Mammary epithelial cell (primary cell): ENCODE measurements at regions of chr19 and their contacts with region 1.

Region 1: DNA sequence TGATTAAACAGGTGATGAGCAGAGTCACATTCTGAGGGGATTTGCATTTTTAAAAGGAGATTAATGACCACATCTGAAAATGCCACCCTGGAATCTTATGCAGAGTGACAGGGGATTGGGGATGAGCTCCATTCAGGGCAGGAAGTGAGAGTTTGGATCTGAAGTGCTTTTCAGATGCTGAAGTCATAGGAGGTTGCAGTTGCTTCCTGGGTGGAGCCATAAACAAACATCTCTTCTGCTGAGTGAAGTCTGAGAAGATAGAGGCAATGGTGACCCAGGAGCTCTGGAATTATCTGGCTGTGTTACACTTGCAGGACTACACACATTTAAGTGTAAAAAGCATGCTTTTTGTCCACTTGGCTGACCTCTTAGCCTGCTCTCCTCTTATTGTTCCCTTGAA is 51.4 kb upstream of the PSG8 start:
- DNase-seq: no peak
- H3K4me3 ChIP-seq: no peak overlapping the region
- H3K27ac ChIP-seq: no peak overlapping the region
- H3K4me1 ChIP-seq: peaks cover 23% of the 10 kb centered on the region
- H3K27me3 ChIP-seq: no peaks in the 10 kb centered on the region
- CTCF ChIP-seq: no peak

Region 2: GRCh38 chr19:42850981-42851717 is 34.3 kb after region 1 on chr19:
- CTCF ChIA-PET with region 1: no interaction called
- dilution Hi-C with region 1: no loop called
- in situ Hi-C with region 1: no loop called
- intact Hi-C with region 1: loop called (anchors 2 kb)
- DNase-seq: peak; percentile 90
- H3K4me3 ChIP-seq: no peak overlapping the region
- H3K27ac ChIP-seq: peak overlapping the region; percentile 95
- H3K4me1 ChIP-seq: peaks cover 37% of the 10 kb centered on the region
- H3K27me3 ChIP-seq: no peaks in the 10 kb centered on the region
- CTCF ChIP-seq: no peak

Region 3: GRCh38 chr19:42989851-42990250 is 173.0 kb after region 1 on chr19:
- CTCF ChIA-PET with region 1: no interaction called
- dilution Hi-C with region 1: no loop called
- in situ Hi-C with region 1: no loop called
- intact Hi-C with region 1: loop called (anchors 5 kb)
- DNase-seq: peak; percentile 26
- H3K4me3 ChIP-seq: no peak overlapping the region
- H3K27ac ChIP-seq: no peak overlapping the region
- H3K4me1 ChIP-seq: peaks cover 19% of the 10 kb centered on the region
- H3K27me3 ChIP-seq: no peaks in the 10 kb centered on the region
- CTCF ChIP-seq: no peak

Region 4: DNA sequence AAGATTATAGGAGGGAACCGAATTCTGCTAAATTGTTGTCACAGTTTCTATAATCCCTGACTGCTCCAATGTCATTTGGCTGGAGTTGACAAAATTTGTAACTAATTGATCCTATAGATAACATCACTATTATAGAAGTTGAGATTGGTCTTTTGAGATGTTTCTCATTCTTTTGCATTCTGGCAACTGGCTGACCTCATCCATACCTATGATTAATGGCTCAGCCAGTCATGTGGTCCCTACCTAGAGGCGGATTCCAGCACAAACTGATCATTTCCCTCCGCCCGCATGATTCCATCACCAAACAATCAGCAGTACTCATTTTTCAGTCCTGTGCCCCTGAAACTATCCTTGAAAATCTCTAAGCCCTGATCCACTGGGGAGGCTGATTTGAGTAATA is 261.4 kb after region 1 on chr19:
- CTCF ChIA-PET with region 1: no interaction called
- dilution Hi-C with region 1: no loop called
- in situ Hi-C with region 1: no loop called
- intact Hi-C with region 1: no loop called
- DNase-seq: peak; percentile 84
- H3K4me3 ChIP-seq: no peak overlapping the region
- H3K27ac ChIP-seq: peak overlapping the region; percentile 69
- H3K4me1 ChIP-seq: peaks cover 23% of the 10 kb centered on the region
- H3K27me3 ChIP-seq: no peaks in the 10 kb centered on the region
- CTCF ChIP-seq: no peak